ENCODE measurements at regions of chr17 and their contacts with region 1.

Region 1: DNA sequence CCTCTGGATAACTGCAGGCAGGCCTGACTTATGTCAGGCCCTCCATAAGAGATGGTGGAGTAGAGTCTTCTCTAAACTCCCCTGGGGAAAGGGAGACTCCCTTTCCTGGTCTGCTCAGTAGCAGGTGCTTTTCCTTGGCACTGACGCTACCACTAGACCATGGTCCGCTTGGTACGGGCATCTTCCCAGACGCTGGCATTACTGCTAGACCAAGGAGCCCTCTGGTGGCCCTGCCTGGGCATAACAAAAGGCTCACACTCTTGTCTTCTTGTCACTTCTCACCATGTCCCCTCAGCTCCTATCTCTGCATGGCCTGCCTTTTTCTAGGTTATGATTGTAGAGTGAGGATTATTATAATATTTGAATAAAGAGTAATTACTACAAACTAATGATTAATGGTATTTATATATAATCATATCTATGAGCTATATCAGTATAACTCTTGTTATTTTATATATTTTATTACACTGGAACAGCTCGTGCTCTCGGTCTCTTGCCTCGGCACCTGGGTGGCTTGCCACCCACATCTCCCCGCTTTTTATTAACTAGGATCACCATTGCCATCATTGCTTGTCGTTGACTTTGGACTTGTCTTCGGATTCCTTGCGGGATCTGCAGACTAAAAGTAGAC is 59.8 kb upstream of the ARL4D start:
- DNase-seq: peak; percentile 47
- ATAC-seq: no peak
- H3K4me3 Mint-ChIP-seq: no peak overlapping the region
- H3K27ac Mint-ChIP-seq: no peak overlapping the region
- H3K4me1 Mint-ChIP-seq: peaks cover 18% of the 10 kb centered on the region
- H3K27me3 Mint-ChIP-seq: no peaks in the 10 kb centered on the region
- CTCF ChIP-seq: peak; percentile 38

Region 2: GRCh38 chr17:42720996-42721583 is 617.9 kb before region 1 on chr17:
- CTCF ChIA-PET with region 1: no interaction called
- POLR2A ChIA-PET with region 1: no interaction called
- intact Hi-C with region 1: loop called (anchors 5 kb)
- DNase-seq: no peak
- ATAC-seq: peak; percentile 73
- H3K4me3 Mint-ChIP-seq: no peak overlapping the region
- H3K27ac Mint-ChIP-seq: peak overlapping the region; percentile 20
- H3K4me1 Mint-ChIP-seq: peaks cover 2% of the 10 kb centered on the region
- H3K27me3 Mint-ChIP-seq: no peaks in the 10 kb centered on the region
- CTCF ChIP-seq: no peak

Region 3: DNA sequence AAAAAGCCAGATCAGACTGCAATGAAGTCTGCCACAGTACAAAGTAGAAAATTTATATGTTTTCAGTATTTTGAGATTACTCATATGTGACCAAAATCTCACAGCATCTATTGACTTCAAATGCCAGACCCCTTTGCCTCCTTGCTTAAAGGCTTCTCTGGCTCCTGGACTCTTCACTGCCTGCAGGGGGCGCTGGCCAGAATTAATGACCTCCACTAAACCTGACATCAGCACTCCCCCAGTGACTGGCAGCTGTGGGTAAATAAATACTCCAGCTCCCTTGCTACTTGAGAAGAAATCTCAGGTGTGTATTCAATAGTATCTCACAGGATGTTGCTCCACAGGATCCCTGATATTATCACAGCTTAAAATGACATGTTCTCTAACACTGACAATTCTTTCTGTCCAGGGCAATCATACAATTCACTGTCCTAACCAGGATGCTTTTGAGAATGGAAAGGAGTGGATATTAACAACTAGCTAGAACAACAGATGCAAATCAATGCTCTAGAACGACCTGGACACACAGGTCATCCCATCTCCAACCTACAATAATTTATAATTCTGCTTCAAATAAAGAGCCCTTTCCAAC is 519.0 kb before region 1 on chr17:
- CTCF ChIA-PET with region 1: no interaction called
- POLR2A ChIA-PET with region 1: no interaction called
- intact Hi-C with region 1: no loop called
- DNase-seq: peak; percentile 43
- ATAC-seq: peak; percentile 20
- H3K4me3 Mint-ChIP-seq: peak overlapping the region; percentile 28
- H3K27ac Mint-ChIP-seq: no peak overlapping the region
- H3K4me1 Mint-ChIP-seq: peaks cover 21% of the 10 kb centered on the region
- H3K27me3 Mint-ChIP-seq: no peaks in the 10 kb centered on the region
- CTCF ChIP-seq: no peak

Region 4: GRCh38 chr17:42843358-42843934 is 495.6 kb before region 1 on chr17:
- CTCF ChIA-PET with region 1: no interaction called
- POLR2A ChIA-PET with region 1: no interaction called
- intact Hi-C with region 1: loop called (anchors 5 kb)
- DNase-seq: no peak
- ATAC-seq: peak; percentile 45
- H3K4me3 Mint-ChIP-seq: no peak overlapping the region
- H3K27ac Mint-ChIP-seq: no peak overlapping the region
- H3K4me1 Mint-ChIP-seq: peaks cover 17% of the 10 kb centered on the region
- H3K27me3 Mint-ChIP-seq: no peaks in the 10 kb centered on the region
- CTCF ChIP-seq: no peak

Region 5: DNA sequence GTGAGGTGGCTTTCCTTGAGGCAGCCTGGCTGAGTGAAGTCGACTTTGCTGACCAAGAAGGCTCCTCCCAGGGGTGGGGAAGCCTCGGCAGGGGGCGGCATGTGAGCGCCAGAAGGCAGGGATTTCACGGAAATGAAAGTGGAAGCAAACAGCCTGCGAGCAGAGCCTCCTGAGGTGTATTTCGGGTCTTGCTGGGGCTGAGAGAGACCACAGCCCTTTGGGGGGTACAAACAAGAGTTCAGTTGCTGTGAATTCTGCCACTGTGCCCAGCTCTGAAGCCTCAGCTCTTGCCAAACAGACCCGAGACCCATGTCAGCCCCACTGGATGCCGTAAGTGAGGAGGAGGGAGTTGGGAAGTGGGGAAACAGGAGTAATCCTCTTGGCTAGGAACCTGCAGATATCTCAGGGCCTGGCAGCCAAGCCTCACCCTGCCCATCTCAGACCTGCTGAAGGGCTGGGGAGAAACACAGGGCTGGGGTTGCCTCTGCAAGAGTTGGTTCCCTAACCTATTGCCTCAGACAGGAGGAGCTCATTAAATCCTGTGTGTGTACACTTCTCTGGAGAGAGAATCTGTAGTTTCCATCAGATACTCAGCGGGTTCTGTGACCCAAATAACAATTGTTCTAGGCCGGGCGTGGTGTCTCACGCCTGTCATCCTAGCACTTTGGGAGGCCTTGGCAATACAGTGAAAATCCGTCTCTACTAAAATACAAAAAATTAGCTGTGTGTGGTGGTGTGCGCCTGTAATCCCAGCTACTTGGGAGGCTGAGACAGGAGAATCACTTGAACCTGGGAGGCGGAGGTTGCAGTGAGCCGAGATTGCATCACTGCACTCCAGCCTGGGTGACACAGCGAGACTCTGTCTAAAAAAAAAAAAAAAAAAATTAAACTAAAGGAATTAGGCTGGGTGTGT is 332.1 kb before region 1 on chr17 and contains the start of gene IFI35:
- CTCF ChIA-PET with region 1: interaction called, 5 read pairs
- POLR2A ChIA-PET with region 1: no interaction called
- intact Hi-C with region 1: loop called (anchors 1 kb)
- DNase-seq: peak; percentile 75
- ATAC-seq: peak; percentile 99
- H3K4me3 Mint-ChIP-seq: peak within 1 kb of the TSS; percentile 99
- H3K27ac Mint-ChIP-seq: peak within 1 kb of the TSS; percentile 99
- H3K4me1 Mint-ChIP-seq: peaks cover 16% of the 10 kb centered on the region
- H3K27me3 Mint-ChIP-seq: no peaks in the 10 kb centered on the region
- CTCF ChIP-seq: no peak
- total RNA-seq, gene IFI35: 41.9 and 50.5 TPM in 2 replicates

Region 6: GRCh38 chr17:43309505-43310332 is 29.3 kb before region 1 on chr17:
- CTCF ChIA-PET with region 1: interaction called, 5 read pairs
- POLR2A ChIA-PET with region 1: interaction called, 5 read pairs
- intact Hi-C with region 1: loop called (anchors 1 kb)
- DNase-seq: no peak
- ATAC-seq: no peak
- H3K4me3 Mint-ChIP-seq: no peak overlapping the region
- H3K27ac Mint-ChIP-seq: no peak overlapping the region
- H3K4me1 Mint-ChIP-seq: peaks cover 2% of the 10 kb centered on the region
- H3K27me3 Mint-ChIP-seq: no peaks in the 10 kb centered on the region
- CTCF ChIP-seq: no peak

Region 7: DNA sequence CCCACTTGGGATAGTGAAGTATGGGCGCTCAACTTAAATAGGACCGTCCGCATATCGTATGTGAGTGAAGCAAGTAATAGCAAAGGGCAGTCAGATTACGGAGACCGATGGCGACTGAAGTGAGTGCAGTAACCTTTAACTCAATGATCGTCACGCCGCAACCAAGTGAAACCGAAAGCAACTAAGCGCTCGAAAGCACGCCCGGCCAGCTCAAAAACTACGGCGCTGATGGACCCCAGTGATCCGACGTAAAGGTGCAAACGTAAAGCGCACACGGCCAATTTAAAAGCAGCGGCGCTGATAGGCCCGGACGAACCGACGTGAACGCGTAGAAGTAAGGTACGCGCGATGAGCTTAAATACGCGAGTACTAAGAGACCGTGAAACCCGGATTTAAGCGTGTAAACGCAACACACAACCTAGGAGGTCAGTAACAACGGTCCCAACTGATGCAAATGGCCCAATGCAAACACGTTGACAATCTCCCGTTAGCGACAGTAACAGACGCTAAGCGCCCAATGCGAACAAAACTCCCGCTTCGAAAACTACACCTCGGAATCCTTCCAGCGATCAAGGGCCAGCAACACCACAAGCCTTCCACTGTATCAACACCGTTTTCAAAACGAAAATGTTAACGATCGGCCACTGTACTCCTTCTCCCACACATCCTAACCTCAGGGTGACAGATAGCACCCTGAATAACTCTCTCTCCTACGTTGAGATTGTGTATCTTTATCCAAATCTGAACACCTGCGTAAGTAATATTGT is 21.9 kb after region 1 on chr17:
- CTCF ChIA-PET with region 1: interaction called, 7 read pairs
- POLR2A ChIA-PET with region 1: interaction called, 23 read pairs
- intact Hi-C with region 1: no loop called
- DNase-seq: peak; percentile 65
- ATAC-seq: peak; percentile 76
- H3K4me3 Mint-ChIP-seq: peak overlapping the region; percentile 93
- H3K27ac Mint-ChIP-seq: peak overlapping the region; percentile 100
- H3K4me1 Mint-ChIP-seq: peaks cover 15% of the 10 kb centered on the region
- H3K27me3 Mint-ChIP-seq: peaks cover 2% of the 10 kb centered on the region
- CTCF ChIP-seq: no peak

Region 8: GRCh38 chr17:43388359-43389045 is 49.5 kb after region 1 on chr17:
- CTCF ChIA-PET with region 1: interaction called, 6 read pairs
- POLR2A ChIA-PET with region 1: no interaction called
- intact Hi-C with region 1: loop called (anchors 2 kb)
- DNase-seq: peak; percentile 94
- ATAC-seq: peak; percentile 76
- H3K4me3 Mint-ChIP-seq: peak overlapping the region; percentile 88
- H3K27ac Mint-ChIP-seq: peak overlapping the region; percentile 96
- H3K4me1 Mint-ChIP-seq: peaks cover 38% of the 10 kb centered on the region
- H3K27me3 Mint-ChIP-seq: no peaks in the 10 kb centered on the region
- CTCF ChIP-seq: no peak

Measured in activated B cell treated with CpG ODN at 0.5 μM for 24 hours (primary cell).